Mammary epithelial cell (primary cell): ENCODE measurements at regions of chr6 and their contacts with region 1.

Region 1: GRCh38 chr6:188821-189655 is 103.2 kb upstream of the DUSP22 start:
- DNase-seq: peak; percentile 74
- H3K4me3 ChIP-seq: no peak overlapping the region
- H3K27ac ChIP-seq: no peak overlapping the region
- H3K4me1 ChIP-seq: no peaks in the 10 kb centered on the region
- H3K27me3 ChIP-seq: no peaks in the 10 kb centered on the region
- CTCF ChIP-seq: peak; percentile 75 to 97

Region 2: DNA sequence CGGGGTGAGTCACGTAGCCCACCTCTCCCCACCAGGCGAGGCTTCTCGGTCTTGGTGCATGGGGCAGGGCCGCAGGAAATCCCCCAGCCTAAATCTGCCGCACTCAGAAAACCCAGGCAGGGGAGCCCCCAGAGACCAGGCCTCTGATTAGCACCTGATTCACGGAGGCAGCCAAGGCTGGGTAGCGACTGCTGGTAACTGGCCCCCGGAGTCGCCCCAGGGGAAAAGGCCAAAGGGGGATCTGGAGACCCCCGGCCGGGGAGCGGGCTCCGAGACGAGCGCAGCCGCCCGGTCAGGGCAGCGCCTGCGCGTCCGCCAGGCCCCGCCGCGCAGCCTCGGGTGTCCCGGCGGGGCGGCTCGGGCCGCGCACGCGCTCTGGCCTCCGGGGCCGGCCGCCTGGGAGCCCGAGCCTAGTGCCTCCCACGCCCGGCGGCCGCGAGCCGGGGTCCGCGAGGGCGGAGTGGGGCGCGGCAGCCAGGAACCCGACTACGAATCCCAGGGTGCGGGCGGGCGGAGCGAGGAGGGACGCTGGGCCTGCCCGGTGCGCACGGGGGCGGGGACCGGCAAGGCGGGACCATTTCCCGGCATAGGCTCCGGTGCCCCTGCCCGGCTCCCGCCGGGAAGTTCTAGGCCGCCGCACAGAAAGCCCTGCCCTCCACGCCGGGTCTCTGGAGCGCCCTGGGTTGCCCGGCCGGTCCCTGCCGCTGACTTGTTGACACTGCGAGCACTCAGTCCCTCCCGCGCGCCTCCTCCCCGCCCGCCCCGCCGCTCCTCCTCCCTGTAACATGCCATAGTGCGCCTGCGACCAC is 102.9 kb after region 1 on chr6 and contains the start of gene DUSP22:
- CTCF ChIA-PET with region 1: no interaction called
- dilution Hi-C with region 1: no loop called
- in situ Hi-C with region 1: no loop called
- intact Hi-C with region 1: loop called (anchors 1 kb)
- DNase-seq: peak; percentile 91
- H3K4me3 ChIP-seq: peak within 1 kb of the TSS; percentile 77 to 79 (median 78)
- H3K27ac ChIP-seq: peak within 1 kb of the TSS; percentile 91
- H3K4me1 ChIP-seq: peaks cover 17% of the 10 kb centered on the region
- H3K27me3 ChIP-seq: no peaks in the 10 kb centered on the region
- CTCF ChIP-seq: no peak
- total RNA-seq, gene DUSP22: 21.5 to 28.2 TPM

Region 3: DNA sequence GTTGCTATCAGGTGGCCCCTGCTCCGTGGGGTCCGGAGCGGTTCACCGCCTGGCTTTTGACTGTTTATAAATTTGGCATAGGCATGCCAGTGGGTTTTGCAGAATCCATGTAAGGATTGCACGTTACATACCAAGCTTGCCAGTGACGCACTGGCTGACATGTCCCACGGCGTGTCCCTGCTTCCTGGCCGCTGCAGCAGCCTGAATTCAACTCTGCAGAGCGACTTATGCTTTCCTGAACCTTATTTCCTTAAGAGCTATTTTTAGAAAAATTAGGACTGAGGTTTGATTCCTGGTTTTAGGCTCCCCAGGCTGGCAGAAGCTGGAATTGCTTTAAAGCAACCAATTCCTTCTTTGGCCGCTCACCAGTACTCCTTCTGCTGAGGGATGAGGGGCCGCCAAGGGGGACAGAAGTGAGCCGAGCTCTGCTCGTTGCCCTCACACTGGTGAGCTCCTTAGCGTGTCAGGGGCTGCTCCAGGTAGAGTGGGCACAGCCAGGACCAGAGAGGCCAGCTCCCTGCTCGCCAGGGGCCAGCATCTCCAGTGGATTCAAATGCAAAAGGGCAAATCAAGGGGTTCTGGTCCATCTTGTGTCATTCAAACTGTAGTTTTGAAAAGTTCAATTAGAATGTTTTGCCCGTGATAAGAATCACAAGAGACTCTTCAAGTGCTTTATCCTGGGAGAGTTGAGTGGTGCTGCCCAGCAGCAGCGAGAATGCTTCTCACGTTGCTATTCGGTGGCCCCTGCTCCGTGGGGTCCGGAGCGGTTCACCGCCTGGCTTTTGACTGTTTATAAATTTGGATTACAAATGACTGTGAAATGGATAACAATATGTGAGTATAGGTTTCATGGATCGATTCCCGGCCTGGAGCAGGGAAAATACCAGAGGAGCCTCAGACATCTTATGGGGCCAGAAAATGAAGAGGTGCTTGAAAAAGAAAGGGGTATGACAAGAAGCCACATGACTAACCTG is 185.0 kb after region 1 on chr6:
- CTCF ChIA-PET with region 1: no interaction called
- dilution Hi-C with region 1: no loop called
- in situ Hi-C with region 1: no loop called
- intact Hi-C with region 1: loop called (anchors 1 kb)
- DNase-seq: no peak
- H3K4me3 ChIP-seq: no peak overlapping the region
- H3K27ac ChIP-seq: no peak overlapping the region
- H3K4me1 ChIP-seq: no peaks in the 10 kb centered on the region
- H3K27me3 ChIP-seq: peaks cover 6% of the 10 kb centered on the region
- CTCF ChIP-seq: peak in 1 of 2 donors; percentile 13

Region 4: GRCh38 chr6:551405-551804 is 362.4 kb after region 1 on chr6:
- CTCF ChIA-PET with region 1: no interaction called
- dilution Hi-C with region 1: no loop called
- in situ Hi-C with region 1: no loop called
- intact Hi-C with region 1: loop called (anchors 5 kb)
- DNase-seq: peak; percentile 70
- H3K4me3 ChIP-seq: no peak overlapping the region
- H3K27ac ChIP-seq: no peak overlapping the region
- H3K4me1 ChIP-seq: peaks cover 3% of the 10 kb centered on the region
- H3K27me3 ChIP-seq: no peaks in the 10 kb centered on the region
- CTCF ChIP-seq: peak; percentile 5 to 56

Region 5: DNA sequence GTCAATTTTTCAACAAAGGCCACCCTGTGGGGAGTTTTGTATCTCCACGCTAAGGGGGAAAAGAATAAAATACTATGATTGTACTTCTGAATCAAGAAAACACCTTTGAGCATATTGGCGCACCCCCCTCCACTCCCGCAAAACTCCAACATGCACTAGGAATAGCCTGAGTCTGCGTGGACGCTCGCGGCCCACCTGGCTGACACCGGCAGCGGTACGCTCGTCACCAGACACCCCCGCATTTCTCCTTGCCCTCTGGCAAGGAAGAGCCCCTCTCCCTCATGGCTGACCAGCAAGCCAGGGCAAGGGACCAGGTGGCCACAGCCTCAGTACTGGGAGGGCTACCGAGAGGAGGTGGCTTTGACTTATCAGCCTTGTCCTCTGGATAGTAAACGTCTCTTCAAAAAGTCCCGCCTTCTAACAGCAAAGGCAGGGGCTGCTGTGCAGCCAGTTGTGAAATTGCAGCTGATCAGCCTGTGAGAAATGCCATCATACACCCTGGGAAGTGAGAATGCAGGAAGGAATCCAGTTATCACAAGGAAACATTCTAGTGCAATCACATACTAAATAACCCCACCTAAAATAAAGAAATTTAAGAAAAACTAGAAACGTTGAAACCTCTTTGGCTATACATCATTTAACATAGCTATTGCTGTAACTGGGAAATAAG is 383.7 kb after region 1 on chr6:
- CTCF ChIA-PET with region 1: no interaction called
- dilution Hi-C with region 1: no loop called
- in situ Hi-C with region 1: no loop called
- intact Hi-C with region 1: no loop called
- DNase-seq: no peak
- H3K4me3 ChIP-seq: no peak overlapping the region
- H3K27ac ChIP-seq: no peak overlapping the region
- H3K4me1 ChIP-seq: no peaks in the 10 kb centered on the region
- H3K27me3 ChIP-seq: no peaks in the 10 kb centered on the region
- CTCF ChIP-seq: no peak

Region 6: DNA sequence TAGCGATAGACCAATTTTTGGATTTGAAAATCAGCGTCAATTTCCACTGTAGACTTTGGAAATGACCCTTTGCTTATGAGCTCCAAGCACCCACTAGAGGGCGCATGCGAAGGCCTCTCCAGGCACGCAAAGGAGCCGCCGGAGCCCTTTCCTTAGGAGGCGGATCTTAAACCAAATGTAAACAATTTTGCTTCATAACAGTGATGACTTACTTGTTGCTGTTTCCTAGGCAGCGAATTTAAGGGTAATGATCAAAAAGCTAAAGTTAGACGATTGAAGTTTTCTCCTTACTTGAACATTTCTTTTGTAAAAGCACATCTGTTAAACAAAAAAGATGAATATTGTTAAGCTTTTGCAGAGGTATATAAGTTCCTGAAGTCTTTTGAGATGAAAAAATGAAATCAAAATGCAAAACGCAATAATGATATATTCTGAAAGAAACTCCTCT is 533.1 kb after region 1 on chr6:
- CTCF ChIA-PET with region 1: no interaction called
- dilution Hi-C with region 1: no loop called
- in situ Hi-C with region 1: no loop called
- intact Hi-C with region 1: loop called (anchors 2 kb)
- DNase-seq: peak; percentile 65
- H3K4me3 ChIP-seq: no peak overlapping the region
- H3K27ac ChIP-seq: no peak overlapping the region
- H3K4me1 ChIP-seq: no peaks in the 10 kb centered on the region
- H3K27me3 ChIP-seq: no peaks in the 10 kb centered on the region
- CTCF ChIP-seq: peak; percentile 94 to 95

Region 7: GRCh38 chr6:1381481-1382330 is 1192.7 kb after region 1 on chr6:
- CTCF ChIA-PET with region 1: no interaction called
- dilution Hi-C with region 1: no loop called
- in situ Hi-C with region 1: no loop called
- intact Hi-C with region 1: loop called (anchors 5 kb)
- DNase-seq: no peak
- H3K4me3 ChIP-seq: peak overlapping the region in 2 of 3 experiments; percentile 24 to 29
- H3K27ac ChIP-seq: no peak overlapping the region
- H3K4me1 ChIP-seq: peaks cover 13% of the 10 kb centered on the region
- H3K27me3 ChIP-seq: peaks cover 81% of the 10 kb centered on the region
- CTCF ChIP-seq: peak; percentile 57 to 59